HCT116 (cell line): ENCODE measurements at regions of chr18 and their contacts with region 1.

Region 1: DNA sequence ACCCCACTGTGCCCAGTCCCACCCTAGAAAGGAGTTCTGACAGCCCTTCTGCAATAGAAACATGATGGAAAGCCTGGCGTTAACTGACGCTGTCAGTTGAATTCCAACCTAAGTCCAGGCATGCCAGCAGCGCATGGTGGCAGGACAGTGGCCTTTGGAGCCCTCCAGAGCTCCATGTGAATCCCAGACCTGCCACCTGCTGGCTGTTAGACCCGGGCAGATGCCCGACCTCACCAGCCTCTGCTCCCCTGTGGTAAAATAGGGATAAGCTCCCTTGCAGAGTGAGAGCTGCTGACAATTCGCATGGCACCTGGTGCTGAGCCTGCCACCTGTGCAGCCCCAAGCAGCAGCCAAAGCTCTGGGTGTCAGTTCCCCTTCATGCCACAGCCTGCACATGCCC is 138.6 kb downstream of the LOXHD1 start:
- DNase-seq: no peak
- ATAC-seq: peak; percentile 80
- H3K4me3 ChIP-seq: no peak overlapping the region
- H3K27ac ChIP-seq: no peak overlapping the region
- H3K4me1 ChIP-seq: no peaks in the 10 kb centered on the region
- H3K27me3 ChIP-seq: peaks cover 57% of the 10 kb centered on the region
- CTCF ChIP-seq: peak; percentile 31 to 42 (median 35); a peak in 5 of 6 replicates
- POLR2A ChIP-seq: no peak
- RAD21 ChIP-seq: peak; percentile 54

Region 2: DNA sequence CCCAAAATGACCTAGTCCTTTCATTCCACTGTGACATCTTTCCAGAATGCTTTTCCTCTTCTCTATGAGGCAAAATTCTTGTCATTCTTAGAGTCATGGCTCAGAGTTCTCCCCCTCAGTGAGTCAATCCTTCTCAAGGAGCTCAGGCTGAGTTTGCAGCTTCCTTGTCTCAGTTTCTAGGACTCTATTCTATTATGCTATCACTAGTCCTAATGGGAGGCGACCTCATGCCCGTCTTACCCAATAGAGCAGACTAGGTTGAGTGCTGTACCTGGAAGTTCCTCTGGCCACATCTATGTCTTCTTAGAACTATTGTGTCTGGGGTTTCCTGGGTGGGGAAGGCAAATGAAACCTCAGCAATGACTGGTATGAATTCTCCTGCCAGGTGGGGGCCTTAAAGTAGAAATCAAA is 362.8 kb before region 1 on chr18:
- CTCF ChIA-PET with region 1: no interaction called
- POLR2A ChIA-PET with region 1: no interaction called
- RAD21 ChIA-PET with region 1: no interaction called
- intact Hi-C with region 1: loop called (anchors 10 kb)
- DNase-seq: no peak
- ATAC-seq: peak; percentile 66
- H3K4me3 ChIP-seq: peak overlapping the region in 1 of 2 experiments; percentile 33; a peak in 2 of 4 replicates
- H3K27ac ChIP-seq: peak overlapping the region; percentile 16; the same call in 1 of the 2 replicates
- H3K4me1 ChIP-seq: peaks cover 31 to 53% of the 10 kb centered on the region in 2 experiments
- H3K27me3 ChIP-seq: no peaks in the 10 kb centered on the region
- CTCF ChIP-seq: no peak
- POLR2A ChIP-seq: no peak
- RAD21 ChIP-seq: no peak

Region 3: DNA sequence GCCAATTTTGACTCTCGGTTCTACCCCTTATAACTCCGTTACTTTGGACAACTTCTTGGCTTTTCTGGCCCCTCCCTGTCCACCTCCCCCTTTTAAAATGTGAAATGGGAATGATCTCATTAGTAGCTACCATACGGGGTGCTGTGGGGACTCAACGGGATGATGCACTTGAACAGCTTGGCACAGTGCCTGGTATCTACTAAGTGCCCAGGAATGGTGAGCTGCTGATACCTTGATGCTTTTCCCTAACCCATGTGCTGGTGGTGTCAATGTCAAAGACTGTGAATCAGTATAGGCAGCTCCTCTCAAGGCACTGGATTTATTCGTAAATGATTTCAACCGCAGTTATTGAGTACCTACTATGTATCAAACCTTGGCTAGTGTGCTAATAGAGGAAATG is 65.6 kb before region 1 on chr18:
- CTCF ChIA-PET with region 1: no interaction called
- POLR2A ChIA-PET with region 1: no interaction called
- RAD21 ChIA-PET with region 1: no interaction called
- intact Hi-C with region 1: loop called (anchors 10 kb)
- DNase-seq: peak; percentile 28
- ATAC-seq: peak; percentile 73
- H3K4me3 ChIP-seq: no peak overlapping the region
- H3K27ac ChIP-seq: no peak overlapping the region
- H3K4me1 ChIP-seq: peaks cover 0 to 17% of the 10 kb centered on the region in 2 experiments; a peak in 2 of 4 replicates
- H3K27me3 ChIP-seq: no peaks in the 10 kb centered on the region
- CTCF ChIP-seq: no peak
- POLR2A ChIP-seq: no peak
- RAD21 ChIP-seq: no peak